Activated B cell treated with CpG ODN at 0.5 μM for 24 hours (primary cell): ENCODE measurements at regions of chr21 and their contacts with region 1.

Region 1: DNA sequence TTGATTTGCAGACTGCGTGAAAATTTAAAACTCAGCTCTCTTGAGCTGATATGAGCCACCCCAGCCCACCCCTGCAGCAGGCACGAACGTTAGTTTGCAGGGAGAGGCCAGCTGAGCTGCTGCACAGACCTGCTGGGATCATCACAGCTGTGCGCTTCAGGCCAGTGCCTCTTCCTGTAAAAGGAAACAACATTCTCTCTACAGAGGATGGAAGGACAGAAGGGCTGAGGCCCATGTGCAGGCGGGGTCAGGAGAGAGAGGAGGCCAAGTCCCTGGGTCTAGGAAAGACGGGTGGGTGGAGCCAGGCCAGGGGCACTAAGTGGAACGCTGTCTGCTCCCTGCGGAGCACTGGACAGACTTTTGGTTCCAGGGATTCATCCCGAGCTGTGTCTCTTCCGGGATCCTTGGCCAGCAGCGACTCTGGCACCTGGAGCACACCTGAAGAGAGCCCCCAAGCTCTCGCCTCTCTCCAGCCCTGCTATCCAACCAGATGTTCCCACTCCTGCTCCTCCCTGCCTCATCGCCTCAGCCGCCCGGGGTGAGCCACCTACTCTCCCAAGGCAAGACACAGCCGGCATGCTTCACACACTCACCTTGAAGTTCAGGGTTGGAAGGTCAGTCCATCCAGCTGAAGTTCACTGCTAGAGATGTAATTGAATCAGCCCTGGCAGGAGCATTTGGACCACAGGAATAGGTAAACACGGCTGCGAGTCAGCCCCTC is 42.4 kb downstream of the RSPH1 start:
- DNase-seq: no peak
- ATAC-seq: no peak
- H3K4me3 Mint-ChIP-seq: no peak overlapping the region
- H3K27ac Mint-ChIP-seq: no peak overlapping the region
- H3K4me1 Mint-ChIP-seq: peaks cover 11% of the 10 kb centered on the region
- H3K27me3 Mint-ChIP-seq: no peaks in the 10 kb centered on the region
- CTCF ChIP-seq: no peak

Region 2: DNA sequence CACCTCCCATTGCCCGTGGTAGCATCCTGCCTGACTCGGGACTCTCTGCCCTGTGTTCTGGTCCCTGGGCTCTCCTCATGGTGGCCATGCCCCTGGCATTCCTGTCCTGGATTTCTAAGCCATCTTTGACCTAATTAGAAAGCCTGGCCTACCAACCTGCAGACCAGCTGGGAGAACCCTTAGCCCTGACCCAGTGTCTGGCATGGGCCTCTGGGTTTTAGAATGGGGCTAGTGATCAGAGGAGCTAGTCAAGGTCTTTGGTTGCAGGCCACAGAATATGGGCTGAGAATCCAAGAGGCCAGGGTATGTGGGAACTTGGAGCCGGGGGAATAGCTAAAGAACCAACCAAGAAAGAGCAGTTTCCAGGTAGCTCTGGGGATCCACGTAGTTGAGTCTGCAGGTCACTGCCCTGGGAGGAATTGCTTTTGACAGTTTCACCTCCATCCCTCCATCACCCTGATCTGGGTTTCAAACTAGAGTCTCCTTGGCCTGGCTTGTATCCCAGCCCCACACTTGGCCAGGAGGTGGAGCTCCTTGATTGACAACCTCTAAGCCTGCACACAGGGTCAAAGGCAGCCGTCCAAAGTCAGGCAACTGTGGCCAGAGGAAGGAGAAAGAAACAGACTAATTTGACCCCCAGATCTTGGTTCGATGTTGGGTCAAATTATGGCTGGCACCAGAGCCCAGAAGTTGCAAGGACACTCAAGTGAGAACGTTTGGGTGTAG is 289.4 kb before region 1 on chr21:
- CTCF ChIA-PET with region 1: no interaction called
- POLR2A ChIA-PET with region 1: no interaction called
- intact Hi-C with region 1: loop called (anchors 1 kb)
- DNase-seq: no peak
- ATAC-seq: peak; percentile 76
- H3K4me3 Mint-ChIP-seq: no peak overlapping the region
- H3K27ac Mint-ChIP-seq: no peak overlapping the region
- H3K4me1 Mint-ChIP-seq: peaks cover 14% of the 10 kb centered on the region
- H3K27me3 Mint-ChIP-seq: peaks cover 3% of the 10 kb centered on the region
- CTCF ChIP-seq: no peak

Region 3: GRCh38 chr21:42309753-42310221 is 143.9 kb before region 1 on chr21:
- CTCF ChIA-PET with region 1: interaction called, 5 read pairs
- POLR2A ChIA-PET with region 1: no interaction called
- intact Hi-C with region 1: loop called (anchors 1 kb)
- DNase-seq: peak; percentile 43
- ATAC-seq: peak; percentile 71
- H3K4me3 Mint-ChIP-seq: no peak overlapping the region
- H3K27ac Mint-ChIP-seq: no peak overlapping the region
- H3K4me1 Mint-ChIP-seq: peaks cover 6% of the 10 kb centered on the region
- H3K27me3 Mint-ChIP-seq: peaks cover 18% of the 10 kb centered on the region
- CTCF ChIP-seq: no peak

Region 4: GRCh38 chr21:42414928-42415769 is 38.5 kb before region 1 on chr21:
- CTCF ChIA-PET with region 1: no interaction called
- POLR2A ChIA-PET with region 1: no interaction called
- intact Hi-C with region 1: loop called (anchors 1 kb)
- DNase-seq: peak; percentile 62
- ATAC-seq: peak; percentile 86
- H3K4me3 Mint-ChIP-seq: peak overlapping the region; percentile 70
- H3K27ac Mint-ChIP-seq: peak overlapping the region; percentile 84
- H3K4me1 Mint-ChIP-seq: peaks cover 38% of the 10 kb centered on the region
- H3K27me3 Mint-ChIP-seq: peaks cover 4% of the 10 kb centered on the region
- CTCF ChIP-seq: no peak

Region 5: DNA sequence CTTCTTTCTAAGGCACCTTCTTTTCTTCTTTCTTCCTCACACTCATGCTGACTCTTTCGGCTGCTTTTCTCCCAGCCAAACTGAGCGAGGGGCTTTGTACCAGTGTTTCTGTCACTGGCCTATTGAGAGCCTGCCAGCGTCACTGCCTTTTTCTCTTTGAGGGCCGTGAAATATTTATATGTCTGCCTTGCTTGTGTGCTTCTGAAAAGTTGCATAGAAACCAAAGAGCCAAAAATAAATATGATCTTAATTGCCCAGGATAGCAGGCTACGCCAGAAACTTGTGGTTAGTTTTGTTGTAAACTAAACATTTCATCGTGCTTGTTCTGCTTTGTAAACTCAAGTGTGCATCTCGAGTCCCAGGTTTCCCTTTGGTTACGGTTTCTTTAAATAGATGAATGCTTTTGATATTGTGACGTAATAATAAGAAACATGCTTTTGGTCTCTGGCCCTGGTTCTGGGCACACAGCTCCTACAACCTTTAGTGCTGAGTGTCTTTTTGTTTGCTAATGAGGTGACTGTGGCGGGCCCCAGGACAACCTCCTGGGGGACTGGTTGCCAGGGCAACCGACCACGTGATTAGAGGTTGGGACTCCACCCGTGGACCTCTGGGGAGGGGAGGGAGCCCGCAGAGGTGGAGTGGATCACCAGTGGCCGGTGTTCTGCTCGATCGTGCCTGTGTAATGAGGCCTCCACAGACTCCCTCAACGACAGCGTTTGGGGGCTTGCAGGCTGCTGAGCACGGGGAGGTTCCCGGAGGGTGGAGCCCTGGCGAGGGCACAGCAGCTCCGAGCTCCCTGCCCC is 70.9 kb after region 1 on chr21:
- CTCF ChIA-PET with region 1: no interaction called
- POLR2A ChIA-PET with region 1: interaction called, 24 read pairs
- intact Hi-C with region 1: no loop called
- DNase-seq: peak; percentile 90
- ATAC-seq: peak; percentile 83
- H3K4me3 Mint-ChIP-seq: peak overlapping the region; percentile 78
- H3K27ac Mint-ChIP-seq: peak overlapping the region; percentile 95
- H3K4me1 Mint-ChIP-seq: peaks cover 87% of the 10 kb centered on the region
- H3K27me3 Mint-ChIP-seq: no peaks in the 10 kb centered on the region
- CTCF ChIP-seq: no peak